ENCODE measurements at regions of chr12 and their contacts with region 1.

Region 1: GRCh38 chr12:31659087-31659933 is at the start of gene ETFBKMT:
- DNase-seq: peak; percentile 97
- H3K4me3 ChIP-seq: peak within 1 kb of the TSS; percentile 64 to 87 (median 74)
- H3K27ac ChIP-seq: peak within 1 kb of the TSS; percentile 92 to 96 (median 95)
- H3K4me1 ChIP-seq: peaks cover 5 to 17% (median 11%) of the 10 kb centered on the region in 4 donors
- H3K27me3 ChIP-seq: no peaks in the 10 kb centered on the region
- CTCF ChIP-seq: peak; percentile 40 to 81 (median 61)
- EP300 ChIP-seq: no peak
- POLR2A ChIP-seq: no peak
- total RNA-seq, gene ETFBKMT: 0.83 to 5.1 (median 2.9) TPM

Region 2: DNA sequence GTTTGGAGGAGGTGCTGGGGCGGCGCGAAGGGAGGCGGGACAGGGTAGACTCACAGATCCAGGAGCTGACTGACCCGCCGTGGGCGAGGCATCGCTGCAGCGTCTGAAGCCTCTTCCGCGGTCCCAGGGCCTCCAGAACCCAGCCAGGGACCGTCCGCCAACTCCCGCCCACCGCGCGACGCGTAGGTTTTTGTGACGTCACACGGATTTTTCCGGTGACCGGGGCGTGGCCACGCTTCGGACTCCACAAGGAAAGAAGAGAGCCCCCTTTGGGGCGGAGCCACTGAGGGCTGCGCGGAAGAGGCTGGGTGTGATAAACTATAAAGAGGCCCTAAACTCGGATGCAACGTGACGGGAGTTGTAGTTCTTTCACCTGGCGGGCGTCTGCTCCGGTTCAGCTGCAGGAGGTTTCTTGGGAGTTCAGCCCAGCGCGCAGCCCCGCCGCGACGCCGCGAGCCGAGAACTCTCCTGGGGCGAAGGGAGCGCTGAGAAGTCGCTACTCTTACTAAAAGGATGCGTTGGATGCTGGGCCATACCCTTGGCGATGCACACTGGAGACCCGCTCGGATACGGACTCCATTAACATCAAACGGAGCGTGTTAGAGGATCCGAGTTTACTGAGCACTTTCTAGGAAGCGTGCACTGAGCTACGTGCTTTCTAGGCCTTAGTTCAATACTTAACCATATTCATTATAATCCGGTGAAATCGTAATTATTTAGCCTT is 69.8 kb after region 1 on chr12 and contains the start of gene AMN1:
- intact Hi-C with region 1: loop called (anchors 2 kb)
- DNase-seq: peak; percentile 100
- H3K4me3 ChIP-seq: peak within 1 kb of the TSS; percentile 70 to 82 (median 74)
- H3K27ac ChIP-seq: peak within 1 kb of the TSS; percentile 89 to 97 (median 95)
- H3K4me1 ChIP-seq: peaks cover 19 to 47% (median 36%) of the 10 kb centered on the region in 4 donors
- H3K27me3 ChIP-seq: no peaks in the 10 kb centered on the region
- CTCF ChIP-seq: peak in 2 of 3 experiments; percentile 14 to 26
- EP300 ChIP-seq: no peak
- POLR2A ChIP-seq: no peak
- total RNA-seq, gene AMN1: 9.4 to 17.1 (median 11.1) TPM

Region 3: DNA sequence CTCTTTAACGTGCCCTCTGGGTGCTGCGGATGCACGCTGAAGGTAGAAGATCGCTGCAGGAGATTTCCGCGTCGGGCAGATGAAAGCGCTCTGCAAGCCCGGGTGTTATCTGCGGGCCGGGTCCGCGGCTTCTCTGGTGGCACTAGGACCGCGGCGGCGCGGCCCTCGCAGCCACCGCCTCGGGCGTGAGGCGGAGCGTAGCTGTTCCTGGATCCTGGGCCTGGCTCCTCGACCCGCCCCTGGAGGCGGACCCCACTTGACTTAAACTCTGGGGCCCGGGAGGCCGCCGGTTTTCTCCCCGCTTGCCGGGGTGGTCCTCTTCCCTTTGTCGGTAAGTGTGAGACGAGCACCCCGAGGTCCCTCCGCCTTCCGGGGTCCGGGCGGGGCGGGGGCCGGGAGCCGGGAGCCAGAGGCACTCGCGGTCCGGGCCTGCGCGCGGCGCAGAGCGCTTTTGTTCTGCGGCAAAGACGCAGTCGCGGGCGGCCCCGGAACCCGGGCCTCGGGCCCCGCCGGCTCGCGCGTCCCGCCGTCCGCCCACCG is 299.9 kb after region 1 on chr12 and contains the start of gene RESF1:
- intact Hi-C with region 1: loop called (anchors 5 kb)
- DNase-seq: peak; percentile 95
- H3K4me3 ChIP-seq: peak within 1 kb of the TSS; percentile 67 to 93 (median 80)
- H3K27ac ChIP-seq: peak within 1 kb of the TSS; percentile 87 to 97 (median 92)
- H3K4me1 ChIP-seq: peaks cover 29 to 45% (median 40%) of the 10 kb centered on the region in 4 donors
- H3K27me3 ChIP-seq: no peaks in the 10 kb centered on the region
- CTCF ChIP-seq: no peak
- EP300 ChIP-seq: no peak
- POLR2A ChIP-seq: peak; percentile 57
- total RNA-seq, gene RESF1: 28.3 to 36.2 (median 32.8) TPM

Region 4: DNA sequence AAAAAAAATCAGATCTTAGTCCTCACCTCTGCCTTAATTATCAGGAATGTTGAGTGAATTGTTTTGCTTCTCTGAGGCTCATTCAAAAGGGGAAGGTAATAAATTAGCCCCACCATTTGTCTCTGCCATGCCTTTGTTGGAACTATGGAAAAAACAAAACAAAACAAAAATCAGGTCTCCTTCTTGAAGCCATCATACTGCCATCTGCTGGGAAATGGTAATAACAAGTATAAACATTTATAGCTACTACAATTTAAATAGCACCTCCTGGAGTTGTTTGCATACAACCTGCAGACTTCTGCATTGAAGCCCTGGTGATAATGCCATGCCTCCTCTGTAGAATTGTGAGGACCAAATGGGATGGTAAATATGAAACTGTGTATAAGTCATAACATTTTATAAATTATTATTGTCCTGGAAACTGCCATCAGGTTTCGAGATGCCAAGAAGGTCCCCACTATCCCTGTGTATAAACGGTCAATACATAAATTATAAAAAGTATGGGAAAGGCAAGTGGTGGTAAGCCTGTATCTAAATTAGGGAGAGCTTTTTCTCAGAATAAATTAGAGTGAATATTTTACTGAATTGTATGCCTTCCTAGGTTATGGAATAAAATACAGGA is 652.9 kb after region 1 on chr12:
- intact Hi-C with region 1: loop called (anchors 5 kb)
- DNase-seq: no peak
- H3K4me3 ChIP-seq: no peak overlapping the region
- H3K27ac ChIP-seq: no peak overlapping the region
- H3K4me1 ChIP-seq: peaks cover 0 to 5% (median 0%) of the 10 kb centered on the region in 4 donors
- H3K27me3 ChIP-seq: no peaks in the 10 kb centered on the region
- CTCF ChIP-seq: peak; percentile 45 to 55 (median 53)
- EP300 ChIP-seq: no peak
- POLR2A ChIP-seq: no peak

Region 5: DNA sequence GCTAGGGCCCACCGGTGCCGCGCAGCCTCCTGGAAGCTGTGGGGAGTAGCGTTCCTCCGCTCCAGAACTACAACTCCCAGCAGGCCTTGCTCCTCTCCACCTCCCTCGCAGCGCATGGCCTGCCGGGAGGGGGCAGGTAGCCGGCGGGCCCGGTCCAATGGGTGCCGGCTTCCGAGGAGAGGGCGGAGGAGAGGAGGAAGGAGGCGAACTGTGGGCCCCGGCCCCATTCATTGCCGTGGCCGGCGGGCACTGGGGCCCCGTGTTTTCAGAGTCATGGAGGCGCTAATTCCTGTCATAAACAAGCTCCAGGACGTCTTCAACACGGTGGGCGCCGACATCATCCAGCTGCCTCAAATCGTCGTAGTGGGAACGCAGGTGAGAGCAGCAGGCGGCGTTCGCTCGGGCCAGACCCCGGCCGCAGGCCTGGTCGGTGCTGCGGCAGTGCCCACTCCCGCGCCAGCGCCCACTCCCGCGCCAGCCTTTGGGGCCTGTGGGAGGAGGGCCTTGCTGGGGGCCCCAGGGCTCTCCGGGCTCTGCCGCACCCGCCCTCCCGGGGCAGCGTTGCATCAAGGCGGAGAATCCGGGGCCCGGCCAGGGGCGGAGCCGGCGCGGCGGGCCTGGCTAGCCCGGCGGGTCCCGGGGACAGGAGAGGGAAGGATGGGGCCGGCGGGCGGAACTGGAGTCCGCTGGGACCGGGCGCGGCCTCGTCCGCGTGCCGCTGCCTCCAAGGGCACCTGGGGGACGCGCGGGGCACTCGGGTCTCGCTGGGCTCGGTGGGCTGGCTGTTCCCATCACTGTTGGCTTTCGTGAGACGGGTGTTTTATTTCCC is 1020.0 kb after region 1 on chr12 and contains the start of gene DNM1L:
- intact Hi-C with region 1: loop called (anchors 5 kb)
- DNase-seq: peak; percentile 93
- H3K4me3 ChIP-seq: peak within 1 kb of the TSS; percentile 78 to 99 (median 92)
- H3K27ac ChIP-seq: peak within 1 kb of the TSS; percentile 87 to 99 (median 96)
- H3K4me1 ChIP-seq: peaks cover 12 to 32% (median 26%) of the 10 kb centered on the region in 4 donors
- H3K27me3 ChIP-seq: no peaks in the 10 kb centered on the region
- CTCF ChIP-seq: peak in 1 of 3 experiments; percentile 14
- EP300 ChIP-seq: no peak
- POLR2A ChIP-seq: peak; percentile 58
- total RNA-seq, gene DNM1L: 66.4 to 81.4 (median 71.8) TPM